ENCODE measurements at regions of chr5 and their contacts with region 1.

Region 1: GRCh38 chr5:137320056-137321045 is 178.8 kb downstream of the SPOCK1 start:
- DNase-seq: no peak
- H3K4me3 ChIP-seq: no peak overlapping the region
- CTCF ChIP-seq: peak; percentile 57

Region 2: DNA sequence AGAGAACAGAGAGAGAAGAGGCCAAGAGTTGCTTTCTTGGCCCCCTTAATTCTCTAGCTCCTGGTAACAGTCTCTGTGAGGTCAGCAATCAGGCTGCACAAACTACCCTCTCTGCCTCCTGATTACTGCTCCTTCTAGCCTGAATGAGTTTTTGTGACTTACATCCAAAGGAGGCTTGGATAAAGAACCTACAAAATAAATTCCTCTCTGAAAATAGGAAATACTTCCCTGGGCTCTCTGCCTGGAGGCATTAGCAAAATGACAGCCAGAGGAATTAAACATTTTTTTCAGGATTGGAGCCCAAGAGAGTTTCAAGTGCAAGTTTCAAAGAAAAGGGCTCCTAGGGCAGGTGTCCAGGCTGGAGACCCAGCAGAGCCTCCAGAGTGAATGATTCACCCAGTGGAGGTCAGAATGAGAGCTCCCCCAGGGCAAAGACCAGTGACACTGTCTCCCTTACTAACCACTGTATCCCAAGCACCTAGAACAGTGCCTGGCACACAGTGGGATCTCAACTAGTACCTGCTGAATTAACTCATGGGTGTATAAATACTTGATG is 16.3 kb after region 1 on chr5:
- CTCF ChIA-PET with region 1: interaction called, 105 read pairs
- POLR2A ChIA-PET with region 1: no interaction called
- DNase-seq: no peak
- H3K4me3 ChIP-seq: no peak overlapping the region
- CTCF ChIP-seq: no peak

Region 3: DNA sequence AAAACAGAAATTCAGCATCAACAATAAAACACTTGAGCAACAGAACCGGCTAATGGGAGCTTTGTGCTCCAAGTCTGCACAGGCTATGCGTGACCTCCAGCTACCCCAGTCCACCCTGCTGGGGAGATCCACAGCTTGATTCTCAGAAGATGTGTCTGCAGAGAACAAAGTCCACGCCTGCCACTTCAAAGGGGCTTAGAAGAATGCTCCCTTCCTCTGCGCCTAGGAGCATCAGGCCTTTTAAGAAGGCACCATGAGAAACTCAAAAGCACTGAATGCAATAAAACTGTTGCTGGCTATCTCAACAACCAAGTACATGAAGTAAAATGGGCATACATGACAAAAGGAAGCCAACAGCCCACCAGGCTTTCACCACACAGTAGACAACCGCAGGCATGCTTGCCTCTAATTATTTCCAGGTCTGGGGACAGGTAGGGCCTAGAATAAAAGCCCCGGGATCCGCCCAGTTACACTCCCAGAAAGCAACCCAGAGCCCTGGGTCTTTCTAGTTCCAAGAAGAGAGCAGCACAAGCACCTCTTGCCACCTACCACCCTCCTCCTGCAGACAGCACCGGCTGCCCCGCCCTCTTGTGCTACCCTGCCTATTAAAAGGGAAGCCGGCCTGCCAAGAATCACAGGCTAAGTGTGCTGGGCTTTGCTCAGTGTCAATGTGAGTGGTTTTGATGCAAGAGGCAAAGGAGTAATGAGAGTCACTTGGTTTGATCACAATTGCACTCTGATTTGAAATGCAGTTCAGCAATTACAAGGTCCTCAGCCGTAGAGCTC is 55.6 kb after region 1 on chr5:
- CTCF ChIA-PET with region 1: interaction called, 11 read pairs
- POLR2A ChIA-PET with region 1: no interaction called
- DNase-seq: no peak
- H3K4me3 ChIP-seq: no peak overlapping the region
- CTCF ChIP-seq: no peak

Region 4: GRCh38 chr5:137498736-137499505 is 178.6 kb after region 1 on chr5 and contains the start of gene SPOCK1:
- CTCF ChIA-PET with region 1: interaction called, 170 read pairs
- POLR2A ChIA-PET with region 1: interaction called, 3 read pairs
- DNase-seq: no peak
- H3K4me3 ChIP-seq: peak within 1 kb of the TSS; percentile 81
- CTCF ChIP-seq: peak; percentile 58

Region 5: DNA sequence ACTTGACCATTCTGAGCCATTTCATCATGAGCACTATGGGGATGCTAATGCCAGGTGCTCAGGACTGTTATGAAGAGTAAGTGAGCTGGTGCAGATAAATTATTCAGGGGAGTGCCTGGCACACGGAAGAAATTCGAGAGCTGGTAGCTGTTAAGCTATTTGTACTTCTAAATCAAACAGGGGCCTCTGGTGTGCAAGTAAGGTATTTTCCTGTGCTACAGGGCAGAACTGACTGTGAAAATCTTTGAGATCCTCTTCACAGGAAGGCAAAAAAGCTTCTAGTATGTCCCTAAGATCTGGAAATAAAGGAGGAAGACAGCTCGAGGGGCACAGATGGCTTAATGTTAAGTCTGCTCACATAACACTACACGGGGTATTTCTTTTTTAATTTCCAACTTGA is 285.1 kb after region 1 on chr5:
- CTCF ChIA-PET with region 1: interaction called, 15 read pairs
- POLR2A ChIA-PET with region 1: no interaction called
- DNase-seq: no peak
- H3K4me3 ChIP-seq: no peak overlapping the region
- CTCF ChIP-seq: peak; percentile 34